A673 (cell line): ENCODE measurements at regions of chr9 and their contacts with region 1.

Region 1: GRCh38 chr9:90102292-90102901 is 497.6 kb downstream of the GADD45G start:
- DNase-seq: peak; percentile 81
- H3K4me3 ChIP-seq: no peak overlapping the region
- H3K27ac ChIP-seq: no peak overlapping the region
- H3K4me1 ChIP-seq: no peaks in the 10 kb centered on the region
- H3K27me3 ChIP-seq: no peaks in the 10 kb centered on the region
- CTCF ChIP-seq: peak; percentile 78

Region 2: GRCh38 chr9:89978170-89978569 is 124.2 kb before region 1 on chr9:
- CTCF ChIA-PET with region 1: no interaction called
- POLR2A ChIA-PET with region 1: no interaction called
- intact Hi-C with region 1: loop called (anchors 10 kb)
- DNase-seq: peak; percentile 20
- H3K4me3 ChIP-seq: no peak overlapping the region
- H3K27ac ChIP-seq: no peak overlapping the region
- H3K4me1 ChIP-seq: no peaks in the 10 kb centered on the region
- H3K27me3 ChIP-seq: peaks cover 3% of the 10 kb centered on the region
- CTCF ChIP-seq: peak; percentile 37

Region 3: GRCh38 chr9:90127923-90128322 is 25.5 kb after region 1 on chr9:
- CTCF ChIA-PET with region 1: no interaction called
- POLR2A ChIA-PET with region 1: no interaction called
- intact Hi-C with region 1: no loop called
- DNase-seq: no peak
- H3K4me3 ChIP-seq: no peak overlapping the region
- H3K27ac ChIP-seq: no peak overlapping the region
- H3K4me1 ChIP-seq: peaks cover 21% of the 10 kb centered on the region
- H3K27me3 ChIP-seq: no peaks in the 10 kb centered on the region
- CTCF ChIP-seq: no peak